Ascending aorta (tissue), 2 donors: ENCODE measurements at regions of chr16 and their contacts with region 1.

Region 1: DNA sequence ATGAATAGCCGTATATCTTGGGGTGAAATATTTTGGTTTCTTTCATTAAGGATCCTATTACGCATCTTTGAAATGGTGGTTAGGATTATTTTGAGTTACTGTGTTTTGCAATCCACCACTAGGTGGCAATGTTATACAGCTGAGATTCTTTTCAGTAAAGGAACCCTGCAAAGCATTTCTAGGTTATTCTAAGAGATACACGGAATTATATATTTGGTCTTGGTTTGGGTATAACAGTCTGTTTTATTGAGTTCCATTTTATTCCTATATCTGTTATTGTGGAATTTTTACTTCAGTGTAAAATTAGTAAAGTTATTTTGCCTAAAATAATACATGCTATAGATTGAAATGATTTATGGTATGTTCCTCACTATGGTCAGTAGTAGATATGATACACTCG is 62.9 kb upstream of the CPHXL start:
- DNase-seq: no peak
- H3K4me3 ChIP-seq: no peak overlapping the region
- H3K27ac ChIP-seq: no peak overlapping the region
- H3K4me1 ChIP-seq: no peaks in the 10 kb centered on the region
- H3K27me3 ChIP-seq: no peaks in the 10 kb centered on the region
- CTCF ChIP-seq: peak; percentile 21 to 82 (median 77)

Region 2: GRCh38 chr16:75733305-75734211 is 55.7 kb before region 1 on chr16:
- intact Hi-C with region 1: no loop called
- DNase-seq: peak in 1 of 2 donors; percentile 69
- H3K4me3 ChIP-seq: peak overlapping the region in 1 of 2 donors; percentile 10
- H3K27ac ChIP-seq: peak overlapping the region; percentile 59 to 77
- H3K4me1 ChIP-seq: peaks cover 2 to 13% of the 10 kb centered on the region in 2 donors
- H3K27me3 ChIP-seq: no peaks in the 10 kb centered on the region
- CTCF ChIP-seq: no peak

Region 3: GRCh38 chr16:75818491-75818890 is 29.3 kb after region 1 on chr16:
- intact Hi-C with region 1: no loop called
- DNase-seq: no peak
- H3K4me3 ChIP-seq: no peak overlapping the region
- H3K27ac ChIP-seq: no peak overlapping the region
- H3K4me1 ChIP-seq: no peaks in the 10 kb centered on the region
- H3K27me3 ChIP-seq: no peaks in the 10 kb centered on the region
- CTCF ChIP-seq: no peak

Region 4: DNA sequence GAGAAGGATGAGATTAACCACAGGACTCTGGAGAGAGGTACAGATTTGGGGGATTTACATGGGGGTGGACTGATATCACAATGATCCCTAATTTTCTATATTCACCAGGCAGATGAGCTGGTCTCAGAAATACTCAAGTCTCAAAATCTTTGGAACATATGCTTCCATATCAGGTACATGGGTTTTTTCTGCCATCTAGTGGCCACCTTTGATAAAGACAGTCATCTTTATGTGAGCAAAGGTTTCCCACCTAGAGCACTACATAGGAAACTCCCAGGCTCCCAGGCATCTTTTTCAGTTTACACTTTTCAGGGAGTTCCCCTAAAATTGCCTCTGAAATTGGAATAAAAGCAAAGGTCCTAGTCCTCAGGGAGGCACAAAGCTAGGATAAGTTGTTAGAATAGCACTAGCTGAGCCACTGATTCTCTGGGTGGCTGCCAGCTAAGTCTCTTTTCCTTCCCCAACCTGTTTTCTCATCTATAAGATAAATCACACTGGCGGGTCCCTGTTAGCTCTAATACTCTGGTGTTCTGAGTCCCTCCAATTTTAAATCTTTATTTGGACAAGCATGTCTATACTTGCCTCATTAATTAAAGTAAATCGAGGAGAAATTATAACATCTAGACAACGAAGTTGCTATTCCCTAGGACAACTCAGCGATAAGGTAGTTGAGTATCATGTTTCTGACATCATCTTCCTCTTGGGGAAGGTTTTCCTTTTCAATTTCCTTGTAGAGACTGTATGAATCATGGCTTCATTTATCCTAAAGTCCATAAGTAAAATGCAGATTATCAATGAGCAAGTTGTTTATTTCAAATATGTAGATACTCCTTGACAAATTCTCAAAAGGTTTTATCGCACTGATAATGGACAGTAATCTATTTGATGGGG is 1382.8 kb after region 1 on chr16:
- intact Hi-C with region 1: loop called (anchors 2 kb)
- DNase-seq: no peak
- H3K4me3 ChIP-seq: no peak overlapping the region
- H3K27ac ChIP-seq: no peak overlapping the region
- H3K4me1 ChIP-seq: no peaks in the 10 kb centered on the region
- H3K27me3 ChIP-seq: no peaks in the 10 kb centered on the region
- CTCF ChIP-seq: peak; percentile 52 to 63 (median 63)